GM12878 (cell line): ENCODE measurements at regions of chr9 and their contacts with region 1.

Region 1: GRCh38 chr9:109098171-109098959 is 21.4 kb downstream of the TMEM245 start:
- DNase-seq: no peak
- ATAC-seq: peak; percentile 32; the same call in 1 of the 3 replicates
- H3K4me3 ChIP-seq: no peak overlapping the region
- H3K27ac ChIP-seq: no peak overlapping the region
- H3K4me1 ChIP-seq: peaks cover 30% of the 10 kb centered on the region
- H3K27me3 ChIP-seq: no peaks in the 10 kb centered on the region
- CTCF ChIP-seq: no peak
- EP300 ChIP-seq: no peak
- POLR2A ChIP-seq: no peak
- RAD21 ChIP-seq: no peak

Region 2: DNA sequence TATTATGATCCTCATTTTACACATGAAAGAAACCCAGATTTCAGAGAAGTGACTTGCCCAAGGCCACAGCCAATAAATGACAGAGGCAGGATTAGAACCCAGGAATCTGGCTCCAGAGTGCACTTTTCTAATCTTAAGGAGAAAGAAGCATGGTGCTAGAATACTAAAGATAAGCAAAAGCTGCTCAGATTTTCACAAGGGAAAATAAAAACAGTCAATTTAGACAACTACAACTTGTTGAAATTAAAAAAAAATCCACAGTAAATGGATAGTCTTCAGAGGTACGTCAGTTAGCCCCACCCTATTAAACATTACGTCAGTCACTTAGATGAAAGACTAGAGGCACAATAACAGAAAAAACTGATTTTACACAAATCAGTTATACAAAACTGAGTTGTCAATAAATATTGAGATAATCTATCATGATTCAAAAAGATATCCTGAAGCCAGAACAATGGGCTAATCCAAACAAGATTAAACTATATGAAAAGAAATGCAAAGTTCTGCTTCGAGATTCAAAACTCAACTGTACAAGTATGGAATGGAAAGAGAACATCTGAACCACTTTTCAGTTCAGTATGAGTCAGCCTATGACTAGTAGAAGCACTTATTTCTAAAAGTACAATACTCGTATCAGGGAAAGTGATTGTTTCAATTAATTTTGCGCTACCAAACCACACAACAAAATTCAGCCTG is 12.1 kb after region 1 on chr9:
- CTCF ChIA-PET with region 1: interaction called, 8 read pairs
- POLR2A ChIA-PET with region 1: no interaction called
- RAD21 ChIA-PET with region 1: interaction called, 3 read pairs
- SMC1A ChIA-PET with region 1: interaction called, 11 read pairs
- in situ Hi-C with region 1: no loop called
- intact Hi-C with region 1: no loop called
- DNase-seq: no peak
- ATAC-seq: peak; percentile 81
- H3K4me3 ChIP-seq: peak overlapping the region; percentile 40; the same call in 1 of the 2 replicates
- H3K27ac ChIP-seq: peak overlapping the region; percentile 53
- H3K4me1 ChIP-seq: peaks cover 23% of the 10 kb centered on the region
- H3K27me3 ChIP-seq: no peaks in the 10 kb centered on the region
- CTCF ChIP-seq: no peak
- EP300 ChIP-seq: 0 out of 4 replicates have a peak, but pooled peaks of 1 of the 2 experiments have one; percentile 41
- POLR2A ChIP-seq: no peak
- RAD21 ChIP-seq: no peak

Region 3: GRCh38 chr9:109203761-109204360 is 105.5 kb after region 1 on chr9:
- CTCF ChIA-PET with region 1: no interaction called
- POLR2A ChIA-PET with region 1: no interaction called
- RAD21 ChIA-PET with region 1: no interaction called
- SMC1A ChIA-PET with region 1: no interaction called
- in situ Hi-C with region 1: no loop called
- intact Hi-C with region 1: no loop called
- DNase-seq: no peak
- ATAC-seq: no peak
- H3K4me3 ChIP-seq: no peak overlapping the region
- H3K27ac ChIP-seq: no peak overlapping the region
- H3K4me1 ChIP-seq: no peaks in the 10 kb centered on the region
- H3K27me3 ChIP-seq: peaks cover 2 to 5% of the 10 kb centered on the region in 2 experiments; a peak in 3 of 4 replicates
- CTCF ChIP-seq: no peak
- EP300 ChIP-seq: no peak
- POLR2A ChIP-seq: no peak
- RAD21 ChIP-seq: no peak